ENCODE measurements at regions of chr19 and their contacts with region 1.

Region 1: GRCh38 chr19:36573020-36573885 is at the start of gene ZNF529:
- DNase-seq: peak; percentile 79
- ATAC-seq: peak; percentile 91
- H3K4me3 Mint-ChIP-seq: peak within 1 kb of the TSS; percentile 89
- H3K27ac Mint-ChIP-seq: peak within 1 kb of the TSS; percentile 86
- H3K4me1 Mint-ChIP-seq: peaks cover 33% of the 10 kb centered on the region
- H3K27me3 Mint-ChIP-seq: no peaks in the 10 kb centered on the region
- CTCF ChIP-seq: no peak
- total RNA-seq, gene ZNF529: 21.9 and 23.6 TPM in 2 replicates

Region 2: DNA sequence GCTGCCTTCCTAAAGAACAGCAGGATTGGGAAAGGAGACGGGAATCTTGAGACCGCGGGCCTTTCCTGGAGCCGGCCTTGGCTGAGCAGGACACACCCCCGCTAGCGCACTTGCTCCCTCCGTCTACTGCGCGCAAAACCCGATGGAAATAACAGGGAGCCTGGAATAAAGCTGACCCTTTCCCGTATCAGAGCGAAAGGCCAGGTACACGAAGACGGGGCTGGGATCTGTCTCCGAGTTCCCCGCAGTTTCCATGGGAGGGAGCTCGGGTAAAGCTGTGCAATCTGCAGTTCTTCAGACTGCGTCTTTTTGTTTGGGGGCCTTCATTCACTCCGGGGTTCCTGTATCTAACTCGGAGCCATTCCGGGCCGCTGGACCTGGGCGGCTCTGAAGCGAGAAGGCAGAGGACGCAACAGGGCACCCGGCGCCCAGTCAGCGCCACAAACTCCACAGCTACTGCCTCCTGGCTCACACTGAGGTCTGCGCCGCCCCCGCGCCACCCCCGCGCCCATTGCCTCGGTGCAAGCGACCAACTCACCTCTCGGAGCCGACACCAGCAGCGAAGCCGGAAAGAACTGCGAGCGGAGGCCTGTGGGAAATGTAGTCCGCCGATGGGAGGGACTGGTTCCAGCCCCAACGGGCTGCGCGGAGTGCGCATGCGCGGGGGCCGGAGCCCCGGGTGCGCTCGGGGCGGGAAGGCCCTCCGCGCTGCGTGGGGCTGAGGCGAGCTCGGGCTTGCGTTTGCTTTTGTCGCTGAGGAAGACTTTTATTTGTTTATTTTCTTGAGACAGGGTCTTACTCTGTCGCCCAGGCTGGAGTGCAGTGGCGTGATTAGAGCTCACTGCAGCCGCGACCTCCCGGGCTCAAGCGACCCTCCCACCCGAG is 194.4 kb before region 1 on chr19 and contains the start of gene ZFP14:
- CTCF ChIA-PET with region 1: no interaction called
- POLR2A ChIA-PET with region 1: interaction called, 10 read pairs
- intact Hi-C with region 1: loop called (anchors 1 kb)
- DNase-seq: peak; percentile 92
- ATAC-seq: peak; percentile 99
- H3K4me3 Mint-ChIP-seq: peak within 1 kb of the TSS; percentile 94
- H3K27ac Mint-ChIP-seq: peak within 1 kb of the TSS; percentile 96
- H3K4me1 Mint-ChIP-seq: peaks cover 21% of the 10 kb centered on the region
- H3K27me3 Mint-ChIP-seq: no peaks in the 10 kb centered on the region
- CTCF ChIP-seq: no peak
- total RNA-seq, gene ZFP14: 7.7 and 10.4 TPM in 2 replicates

Region 3: DNA sequence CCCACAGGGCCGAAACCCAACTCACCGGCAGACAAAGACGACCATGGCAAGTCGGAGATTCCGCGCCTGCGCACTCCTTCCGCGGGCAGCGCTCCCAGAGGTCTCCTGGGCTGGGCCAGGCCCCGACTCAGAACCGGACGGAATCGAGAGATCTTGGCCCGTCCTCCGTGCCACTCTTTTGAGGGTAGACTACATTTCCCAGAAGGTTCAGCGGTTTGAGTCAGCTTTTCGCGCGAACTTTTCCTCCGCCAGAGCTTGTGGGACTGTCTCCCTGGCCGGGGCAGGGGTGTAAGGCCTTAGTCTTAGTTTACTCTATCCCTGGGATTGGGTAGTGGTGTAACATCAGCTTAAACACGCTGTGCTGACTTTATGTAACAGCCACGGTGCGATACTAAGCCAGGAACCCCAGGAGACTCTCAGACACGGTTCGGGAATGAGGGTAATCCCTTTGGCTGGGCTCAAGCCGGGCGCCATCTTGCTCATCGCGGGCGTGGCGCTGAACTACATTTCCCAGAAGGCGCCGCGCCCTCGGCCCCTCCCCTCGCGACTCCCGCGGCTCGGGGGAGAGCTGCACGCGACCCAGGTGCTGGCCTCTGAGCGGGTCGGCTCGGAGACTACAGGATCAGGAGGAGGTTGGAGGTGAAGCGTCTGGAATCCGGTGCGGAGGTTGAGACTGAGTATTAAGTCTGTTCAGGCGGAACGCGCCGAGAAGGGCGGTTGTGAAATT is 44.9 kb before region 1 on chr19 and contains the start of gene ZNF260:
- CTCF ChIA-PET with region 1: interaction called, 3 read pairs
- POLR2A ChIA-PET with region 1: interaction called, 36 read pairs
- intact Hi-C with region 1: loop called (anchors 1 kb)
- DNase-seq: peak; percentile 94
- ATAC-seq: peak; percentile 89
- H3K4me3 Mint-ChIP-seq: peak within 1 kb of the TSS; percentile 99
- H3K27ac Mint-ChIP-seq: peak within 1 kb of the TSS; percentile 99
- H3K4me1 Mint-ChIP-seq: peaks cover 27% of the 10 kb centered on the region
- H3K27me3 Mint-ChIP-seq: no peaks in the 10 kb centered on the region
- CTCF ChIP-seq: no peak
- total RNA-seq, gene ZNF260: 9.8 and 13.6 TPM in 2 replicates

Region 4: GRCh38 chr19:36665832-36666231 is 92.6 kb after region 1 on chr19:
- CTCF ChIA-PET with region 1: no interaction called
- POLR2A ChIA-PET with region 1: interaction called, 4 read pairs
- intact Hi-C with region 1: loop called (anchors 1 kb)
- DNase-seq: no peak
- ATAC-seq: no peak
- H3K4me3 Mint-ChIP-seq: peak overlapping the region; percentile 98
- H3K27ac Mint-ChIP-seq: peak overlapping the region; percentile 72
- H3K4me1 Mint-ChIP-seq: peaks cover 31% of the 10 kb centered on the region
- H3K27me3 Mint-ChIP-seq: no peaks in the 10 kb centered on the region
- CTCF ChIP-seq: no peak

Region 5: DNA sequence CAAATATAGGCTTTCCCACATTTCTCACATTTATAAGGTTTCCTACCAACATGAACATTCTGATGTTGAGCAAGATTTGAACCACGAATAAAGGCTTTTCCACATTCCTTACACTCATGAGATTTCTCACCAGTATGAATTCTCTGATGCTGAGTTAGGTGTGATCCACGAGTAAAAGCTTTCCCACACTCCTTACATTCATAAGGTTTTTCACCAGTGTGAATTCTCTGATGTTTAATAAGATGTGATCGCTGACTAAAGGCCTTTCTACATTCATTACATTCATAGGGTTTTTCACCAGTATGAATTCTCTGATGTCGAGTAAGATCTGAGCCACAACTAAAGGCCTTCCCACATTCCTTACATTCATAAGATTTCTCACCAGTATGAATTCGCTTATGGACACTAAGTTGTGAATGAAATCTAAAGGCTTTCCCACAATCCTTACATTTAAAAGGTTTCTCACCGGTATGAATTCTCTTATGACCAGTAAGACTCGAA is 245.9 kb after region 1 on chr19:
- CTCF ChIA-PET with region 1: no interaction called
- POLR2A ChIA-PET with region 1: no interaction called
- intact Hi-C with region 1: no loop called
- DNase-seq: no peak
- ATAC-seq: no peak
- H3K4me3 Mint-ChIP-seq: no peak overlapping the region
- H3K27ac Mint-ChIP-seq: no peak overlapping the region
- H3K4me1 Mint-ChIP-seq: no peaks in the 10 kb centered on the region
- H3K27me3 Mint-ChIP-seq: no peaks in the 10 kb centered on the region
- CTCF ChIP-seq: no peak

Region 6: GRCh38 chr19:36973021-36973843 is 400.0 kb after region 1 on chr19:
- CTCF ChIA-PET with region 1: no interaction called
- POLR2A ChIA-PET with region 1: no interaction called
- intact Hi-C with region 1: loop called (anchors 10 kb)
- DNase-seq: peak; percentile 75
- ATAC-seq: peak; percentile 97
- H3K4me3 Mint-ChIP-seq: peak overlapping the region; percentile 98
- H3K27ac Mint-ChIP-seq: peak overlapping the region; percentile 94
- H3K4me1 Mint-ChIP-seq: peaks cover 10% of the 10 kb centered on the region
- H3K27me3 Mint-ChIP-seq: no peaks in the 10 kb centered on the region
- CTCF ChIP-seq: peak; percentile 38